ENCODE measurements at regions of chr19 and their contacts with region 1.

Region 1: GRCh38 chr19:45485305-45486077 is 11.4 kb downstream of the RTN2 start:
- DNase-seq: peak; percentile 94 to 97
- ATAC-seq: peak; percentile 92 to 97
- H3K4me3 ChIP-seq: peak overlapping the region; percentile 63
- H3K27ac ChIP-seq: peak overlapping the region; percentile 76 to 92
- H3K4me1 ChIP-seq: peaks cover 5% of the 10 kb centered on the region
- CTCF ChIP-seq: peak; percentile 63
- EP300 ChIP-seq: no peak
- POLR2A ChIP-seq: no peak
- RAD21 ChIP-seq: peak; percentile 65 to 71

Region 2: DNA sequence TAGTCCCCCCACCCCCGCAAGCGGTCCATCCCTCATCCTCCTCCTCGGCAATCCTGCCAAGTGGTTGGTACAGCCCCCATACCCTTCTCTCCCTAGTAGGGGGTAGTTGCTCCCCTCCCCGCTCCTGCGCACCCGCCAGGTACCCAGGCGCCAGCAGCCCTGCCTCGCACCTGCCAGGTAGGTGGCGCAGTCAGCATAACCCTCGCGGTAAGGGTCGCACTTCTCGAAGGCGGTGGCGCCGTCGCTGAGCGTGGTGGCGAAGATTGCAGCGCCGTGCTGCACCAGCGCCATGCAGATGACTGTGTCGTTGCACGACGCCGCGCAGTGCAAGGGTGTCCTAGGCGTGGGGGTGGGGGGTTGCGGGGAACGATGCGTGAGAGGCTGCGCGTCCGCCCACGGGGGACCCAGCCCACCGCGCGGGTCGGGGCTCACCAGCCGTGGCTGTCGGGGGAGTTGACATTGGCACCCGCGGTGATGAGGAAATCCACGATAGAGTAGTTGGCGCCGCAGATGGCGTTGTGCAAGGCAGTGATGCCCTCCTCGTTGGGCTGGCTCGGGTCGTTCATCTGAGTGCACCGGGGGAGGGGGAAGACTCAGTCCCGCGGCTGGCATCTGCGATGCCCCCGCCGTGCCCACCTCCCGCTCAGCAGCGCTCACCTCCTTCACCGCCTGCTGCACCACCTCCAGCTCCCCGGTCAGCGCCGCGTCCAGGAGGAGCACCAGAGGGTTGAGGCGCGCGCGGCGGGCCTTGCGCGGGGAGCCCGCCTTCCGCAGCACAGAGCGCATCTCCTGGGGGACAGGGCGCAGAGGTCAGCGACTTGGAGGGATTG is 99.9 kb before region 1 on chr19:
- CTCF ChIA-PET with region 1: no interaction called
- POLR2A ChIA-PET with region 1: no interaction called
- DNase-seq: no peak
- ATAC-seq: peak in 1 of 2 experiments; percentile 15; a peak in 3 of 6 replicates
- H3K4me3 ChIP-seq: no peak overlapping the region
- H3K27ac ChIP-seq: no peak overlapping the region
- H3K4me1 ChIP-seq: no peaks in the 10 kb centered on the region
- CTCF ChIP-seq: no peak
- EP300 ChIP-seq: no peak
- POLR2A ChIP-seq: no peak
- RAD21 ChIP-seq: no peak

Region 3: DNA sequence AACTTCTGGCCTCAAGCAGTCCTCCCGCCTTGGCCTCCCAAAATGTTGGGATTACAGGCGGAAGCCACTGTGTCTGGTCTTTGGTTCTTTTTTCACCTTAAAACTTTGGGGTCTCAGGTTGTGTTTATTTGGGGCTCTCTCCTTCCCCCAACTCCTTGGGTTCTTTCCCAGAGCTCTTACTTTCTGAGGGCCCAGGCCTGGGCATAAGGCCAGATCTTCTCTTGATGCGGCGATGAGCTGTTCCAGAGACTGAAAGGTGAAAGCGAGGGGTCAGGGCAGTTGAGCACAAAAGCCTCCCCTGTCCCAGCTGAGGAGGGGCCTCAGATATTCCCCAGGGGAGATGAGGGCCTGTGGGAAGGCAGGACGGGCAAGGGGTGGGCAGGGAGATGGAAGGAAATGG is 72.0 kb before region 1 on chr19:
- CTCF ChIA-PET with region 1: interaction called, 39 read pairs
- POLR2A ChIA-PET with region 1: no interaction called
- DNase-seq: no peak
- ATAC-seq: no peak
- H3K4me3 ChIP-seq: no peak overlapping the region
- H3K27ac ChIP-seq: no peak overlapping the region
- H3K4me1 ChIP-seq: 0 out of 3 replicates have a peak, but pooled peaks cover 4% of the 10 kb centered on the region
- CTCF ChIP-seq: no peak
- EP300 ChIP-seq: no peak
- POLR2A ChIP-seq: no peak
- RAD21 ChIP-seq: no peak

Region 4: GRCh38 chr19:45446320-45446763 is 39.1 kb before region 1 on chr19:
- CTCF ChIA-PET with region 1: interaction called, 1,883 read pairs
- POLR2A ChIA-PET with region 1: no interaction called
- DNase-seq: peak in 1 of 2 experiments; percentile 83
- ATAC-seq: no peak
- H3K4me3 ChIP-seq: no peak overlapping the region
- H3K27ac ChIP-seq: no peak overlapping the region
- H3K4me1 ChIP-seq: peaks cover 40% of the 10 kb centered on the region
- CTCF ChIP-seq: peak; percentile 79
- EP300 ChIP-seq: no peak
- POLR2A ChIP-seq: no peak
- RAD21 ChIP-seq: peak; percentile 63

Region 5: DNA sequence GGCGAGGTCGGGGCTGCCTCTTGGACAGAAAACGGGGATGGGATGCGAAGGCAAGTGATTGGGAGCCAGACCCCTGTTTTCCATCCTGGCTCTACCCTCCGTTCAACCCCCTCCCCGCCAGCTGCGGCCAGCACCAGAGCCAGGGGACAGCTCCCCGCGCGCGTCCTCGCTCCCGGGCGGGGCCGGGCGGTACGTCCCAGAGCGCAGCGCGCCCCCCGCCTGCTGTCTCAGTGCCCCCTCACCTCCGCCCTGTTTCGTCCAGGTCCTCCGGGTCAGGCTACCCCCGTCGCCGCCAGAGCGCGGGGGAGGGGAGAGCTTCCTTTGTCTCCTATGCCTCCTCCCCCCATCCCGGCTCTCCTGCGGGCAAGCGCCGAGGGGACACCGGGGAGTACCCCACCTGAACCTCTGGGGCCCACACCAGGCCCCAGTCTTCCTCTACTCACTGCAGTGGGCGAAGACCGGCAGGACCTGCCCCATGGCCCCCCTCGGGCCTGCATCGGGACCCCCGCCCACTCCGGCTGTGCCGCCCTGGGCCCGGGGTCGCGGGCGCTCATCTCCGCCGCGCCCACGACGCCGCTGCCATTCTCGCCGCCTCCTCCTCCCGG is 11.0 kb after region 1 on chr19:
- CTCF ChIA-PET with region 1: interaction called, 113 read pairs
- POLR2A ChIA-PET with region 1: no interaction called
- DNase-seq: no peak
- ATAC-seq: peak; percentile 22 to 46
- H3K4me3 ChIP-seq: peak overlapping the region; percentile 75
- H3K27ac ChIP-seq: peak overlapping the region; percentile 61 to 83; a peak in 5 of 6 replicates
- H3K4me1 ChIP-seq: peaks cover 20% of the 10 kb centered on the region
- CTCF ChIP-seq: no peak
- EP300 ChIP-seq: no peak
- POLR2A ChIP-seq: no peak
- RAD21 ChIP-seq: no peak

Region 6: GRCh38 chr19:45515081-45515624 is 29.7 kb after region 1 on chr19:
- CTCF ChIA-PET with region 1: interaction called, 16 read pairs
- POLR2A ChIA-PET with region 1: no interaction called
- DNase-seq: no peak
- ATAC-seq: no peak
- H3K4me3 ChIP-seq: no peak overlapping the region
- H3K27ac ChIP-seq: peak overlapping the region; percentile 63 to 83
- H3K4me1 ChIP-seq: peaks cover 69% of the 10 kb centered on the region
- CTCF ChIP-seq: no peak
- EP300 ChIP-seq: no peak
- POLR2A ChIP-seq: no peak
- RAD21 ChIP-seq: no peak

Region 7: GRCh38 chr19:45650722-45651121 is 165.2 kb after region 1 on chr19:
- CTCF ChIA-PET with region 1: interaction called, 14 read pairs
- POLR2A ChIA-PET with region 1: interaction called, 4 read pairs
- DNase-seq: no peak
- ATAC-seq: no peak
- H3K4me3 ChIP-seq: no peak overlapping the region
- H3K27ac ChIP-seq: no peak overlapping the region
- H3K4me1 ChIP-seq: 0 out of 3 replicates have a peak, but pooled peaks cover 6% of the 10 kb centered on the region
- CTCF ChIP-seq: no peak
- EP300 ChIP-seq: no peak
- POLR2A ChIP-seq: no peak
- RAD21 ChIP-seq: no peak

Measured in A549 (cell line).